Right ventricle myocardium inferior (tissue), 1 donor: ENCODE measurements at regions of chr12 and their contacts with region 1.

Region 1: GRCh38 chr12:14365294-14366208 is at the start of gene ATF7IP:
- DNase-seq: peak; percentile 97
- ATAC-seq: peak; percentile 98
- total RNA-seq, gene ATF7IP: 57.1 TPM

Region 2: DNA sequence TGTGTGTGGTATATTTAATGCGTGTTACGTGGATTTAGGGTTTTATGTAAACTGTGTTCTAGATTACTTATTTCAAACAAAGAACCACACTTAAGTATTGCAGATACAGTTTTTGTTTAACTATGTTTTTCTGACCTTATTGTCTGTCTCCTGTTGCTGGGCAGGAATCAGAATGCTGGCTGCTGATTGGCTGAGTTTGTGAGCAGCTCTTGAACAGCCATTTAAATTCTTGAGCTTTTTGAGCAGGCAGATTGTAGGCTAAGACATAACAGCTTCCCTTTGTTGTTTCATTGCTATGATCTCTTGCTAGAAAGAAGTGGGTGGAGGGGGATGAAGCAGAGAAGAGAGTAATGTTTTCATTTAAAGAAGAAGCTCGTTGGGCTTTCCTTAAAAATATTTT is 52.2 kb after region 1 on chr12:
- intact Hi-C with region 1: loop called (anchors 5 kb)
- DNase-seq: peak; percentile 69
- ATAC-seq: peak; percentile 56

Region 3: DNA sequence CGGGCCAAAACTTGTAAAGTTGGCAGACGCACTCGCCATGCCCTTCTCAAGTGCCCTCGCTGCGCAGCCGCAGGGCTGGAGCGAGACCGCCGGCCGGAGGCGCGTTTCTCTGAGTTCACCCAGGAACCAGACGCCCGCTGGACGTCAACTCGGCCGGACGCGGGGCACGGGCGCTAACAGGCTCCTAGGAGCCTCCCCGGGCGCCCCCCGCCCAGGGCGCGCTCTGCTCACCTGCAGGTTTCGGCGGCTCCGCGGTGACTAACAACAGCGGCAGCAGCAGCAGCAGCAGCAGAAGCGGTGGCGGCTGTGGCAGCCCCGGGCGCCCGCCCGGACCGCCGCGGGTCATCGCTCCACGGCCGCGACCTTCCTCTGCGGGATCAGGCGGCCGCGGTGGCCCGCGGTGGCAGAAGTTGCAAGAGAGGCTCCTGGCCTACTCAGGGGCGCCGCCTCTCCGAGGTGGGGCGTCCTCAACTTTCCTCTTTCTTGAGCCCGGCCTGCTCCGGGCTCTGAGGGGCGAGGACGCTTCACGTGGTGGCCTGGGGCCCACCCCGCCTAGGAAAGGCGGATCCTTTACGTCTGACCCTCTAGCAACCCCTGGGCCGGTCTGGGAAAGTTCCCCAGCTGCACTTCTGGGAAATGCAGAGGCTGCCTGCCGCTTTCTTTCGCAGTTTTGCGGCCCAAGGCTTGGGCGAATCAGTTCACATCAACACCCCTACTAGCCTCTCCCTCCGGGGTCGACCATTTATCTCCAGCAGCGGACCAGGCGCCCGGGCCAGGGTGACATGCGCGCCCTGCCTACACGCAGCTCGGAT is 202.0 kb after region 1 on chr12 and contains the start of gene PLBD1:
- intact Hi-C with region 1: loop called (anchors 10 kb)
- DNase-seq: peak; percentile 93
- ATAC-seq: peak; percentile 92
- total RNA-seq, gene PLBD1: 24.4 TPM